ENCODE measurements at regions of chr11 and their contacts with region 1.

Region 1: GRCh38 chr11:119185981-119186634 is 833 bp downstream of the NHERF4 start:
- DNase-seq: no peak
- H3K4me3 ChIP-seq: no peak overlapping the region
- CTCF ChIP-seq: no peak
- POLR2A ChIP-seq: no peak

Region 2: GRCh38 chr11:117217141-117218084 is 1968.7 kb before region 1 on chr11:
- intact Hi-C with region 1: loop called (anchors 5 kb)
- DNase-seq: no peak
- H3K4me3 ChIP-seq: no peak overlapping the region
- CTCF ChIP-seq: no peak
- POLR2A ChIP-seq: no peak